GM12878 (cell line): ENCODE measurements at regions of chr1 and their contacts with region 1.

Region 1: DNA sequence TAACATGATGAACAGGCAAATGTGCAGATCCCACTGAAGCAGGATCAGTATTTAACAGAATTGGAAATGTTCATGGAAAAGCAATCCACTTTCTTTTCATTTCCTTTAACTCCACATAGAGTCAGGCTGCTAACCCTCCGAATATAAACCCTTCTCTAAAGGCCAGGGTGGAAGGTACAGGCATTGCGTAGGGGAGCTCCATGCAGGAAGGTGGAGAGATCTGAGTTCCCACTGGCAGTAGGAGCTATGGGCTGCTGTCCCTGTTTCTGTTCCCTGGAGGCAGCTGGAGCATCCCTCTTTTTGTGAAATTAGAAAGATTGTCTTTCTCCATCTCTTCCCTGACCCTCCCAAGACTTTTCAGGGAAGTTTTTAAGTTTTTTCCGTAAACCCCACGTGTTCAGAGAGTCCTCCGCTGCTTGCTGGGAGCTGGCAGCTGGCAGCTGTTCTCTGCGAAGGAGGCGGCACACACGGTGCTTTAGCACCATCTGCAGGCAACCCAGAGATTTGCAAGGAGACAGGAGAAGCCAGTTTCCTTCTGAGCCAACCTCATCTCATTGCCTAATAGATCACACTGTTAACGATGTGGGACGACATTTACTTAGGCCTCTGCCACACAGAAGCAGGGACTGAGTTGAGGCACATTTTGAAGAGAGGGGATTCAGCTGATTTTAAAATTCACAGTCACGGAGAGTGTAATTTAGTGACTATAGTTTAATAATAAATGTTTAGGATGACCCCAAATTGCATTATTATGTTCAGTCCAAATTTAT is 55.4 kb upstream of the HOOK1 start:
- DNase-seq: peak; percentile 46
- ATAC-seq: peak; percentile 98
- H3K4me3 ChIP-seq: no peak overlapping the region
- H3K27ac ChIP-seq: no peak overlapping the region
- H3K4me1 ChIP-seq: no peaks in the 10 kb centered on the region
- H3K27me3 ChIP-seq: no peaks in the 10 kb centered on the region
- CTCF ChIP-seq: peak; percentile 91 to 97 (median 96)
- EP300 ChIP-seq: no peak
- POLR2A ChIP-seq: no peak
- RAD21 ChIP-seq: peak; percentile 98

Region 2: DNA sequence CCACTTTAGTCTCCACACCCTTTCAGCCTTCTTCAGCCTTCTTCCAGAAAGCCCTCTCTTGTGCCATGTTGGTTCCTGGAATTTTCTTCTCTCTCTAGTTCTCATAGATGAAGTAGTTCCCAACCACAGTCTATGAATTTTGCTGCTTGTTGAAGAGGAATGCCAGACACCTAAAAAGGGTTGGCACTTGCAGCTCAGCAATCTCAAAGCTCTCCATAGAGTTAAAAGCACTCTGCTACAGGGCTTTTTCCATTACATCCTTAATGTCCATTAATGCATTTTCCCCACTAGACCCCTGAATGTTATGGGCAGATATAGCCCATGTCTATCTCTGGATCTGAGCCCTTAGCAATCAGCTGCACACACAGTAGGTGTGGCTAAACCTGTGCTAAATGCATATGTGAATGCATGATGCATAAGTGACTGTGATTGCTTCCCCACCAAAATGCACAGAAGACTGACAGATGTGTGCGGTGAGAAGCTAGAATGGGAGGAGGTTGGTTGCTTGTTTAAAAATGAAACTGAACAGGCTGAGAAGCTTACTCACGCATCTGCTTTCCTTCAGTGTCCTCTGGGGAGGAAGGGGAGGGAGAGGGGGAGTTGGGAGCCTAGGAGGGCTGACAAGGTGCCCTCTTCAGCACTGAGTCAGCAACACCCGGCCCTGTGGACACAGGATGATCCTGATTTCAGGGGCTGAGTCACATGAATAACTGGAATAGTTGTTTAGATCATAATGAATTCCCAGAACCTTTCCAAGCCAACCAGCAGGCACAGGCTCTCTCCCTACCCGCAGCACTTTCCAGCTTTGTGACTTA is 608.6 kb before region 1 on chr1:
- CTCF ChIA-PET with region 1: no interaction called
- POLR2A ChIA-PET with region 1: no interaction called
- RAD21 ChIA-PET with region 1: no interaction called
- SMC1A ChIA-PET with region 1: no interaction called
- in situ Hi-C with region 1: no loop called
- intact Hi-C with region 1: no loop called
- DNase-seq: peak; percentile 61
- ATAC-seq: peak; percentile 48
- H3K4me3 ChIP-seq: peak overlapping the region; percentile 15; the same call in 1 of the 2 replicates
- H3K27ac ChIP-seq: no peak overlapping the region
- H3K4me1 ChIP-seq: peaks cover 18% of the 10 kb centered on the region
- H3K27me3 ChIP-seq: no peaks in the 10 kb centered on the region
- CTCF ChIP-seq: no peak
- EP300 ChIP-seq: 0 out of 4 replicates have a peak, but pooled peaks of 1 of the 2 experiments have one; percentile 3
- POLR2A ChIP-seq: no peak
- RAD21 ChIP-seq: no peak

Region 3: DNA sequence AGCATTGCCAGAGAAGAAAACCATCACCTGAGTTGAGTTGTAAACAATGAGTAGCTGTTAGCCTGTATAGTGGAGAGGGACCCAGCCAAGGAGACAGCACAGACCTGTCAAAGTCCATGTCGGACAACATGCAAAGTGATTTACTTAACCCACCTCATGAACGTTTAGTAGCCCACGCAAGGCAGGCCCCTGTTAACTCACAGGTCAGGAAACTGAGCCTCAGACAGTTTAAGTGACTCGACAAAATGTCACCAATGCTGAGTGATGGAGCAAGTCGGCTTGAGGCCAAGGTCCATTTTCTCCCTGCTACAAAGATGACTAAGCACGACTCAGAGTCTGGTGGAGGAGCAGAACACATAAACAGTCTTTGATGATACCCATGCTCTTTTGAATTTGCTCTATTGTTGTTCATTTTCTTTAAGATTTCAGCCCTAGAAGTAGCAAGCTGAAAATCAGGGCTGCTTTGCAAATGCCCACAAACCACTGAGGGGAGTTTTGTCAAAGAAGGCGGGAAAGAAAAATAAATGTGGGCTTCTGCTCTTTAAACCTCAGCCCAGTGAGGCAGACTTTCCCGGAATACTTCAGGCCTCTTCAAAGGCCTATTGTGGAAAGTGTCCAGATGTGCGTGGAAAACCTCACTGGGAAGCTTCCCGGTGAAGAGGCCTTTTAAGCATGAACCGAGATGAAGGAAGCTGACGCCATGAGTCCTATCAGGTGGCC is 28.4 kb before region 1 on chr1:
- CTCF ChIA-PET with region 1: interaction called, 18 read pairs
- POLR2A ChIA-PET with region 1: no interaction called
- RAD21 ChIA-PET with region 1: interaction called, 3 read pairs
- SMC1A ChIA-PET with region 1: interaction called, 10 read pairs
- in situ Hi-C with region 1: no loop called
- intact Hi-C with region 1: no loop called
- DNase-seq: no peak
- ATAC-seq: peak; percentile 40
- H3K4me3 ChIP-seq: no peak overlapping the region
- H3K27ac ChIP-seq: no peak overlapping the region
- H3K4me1 ChIP-seq: no peaks in the 10 kb centered on the region; the same call in 1 of the 2 replicates
- H3K27me3 ChIP-seq: no peaks in the 10 kb centered on the region
- CTCF ChIP-seq: no peak
- EP300 ChIP-seq: no peak
- POLR2A ChIP-seq: no peak
- RAD21 ChIP-seq: no peak

Region 4: DNA sequence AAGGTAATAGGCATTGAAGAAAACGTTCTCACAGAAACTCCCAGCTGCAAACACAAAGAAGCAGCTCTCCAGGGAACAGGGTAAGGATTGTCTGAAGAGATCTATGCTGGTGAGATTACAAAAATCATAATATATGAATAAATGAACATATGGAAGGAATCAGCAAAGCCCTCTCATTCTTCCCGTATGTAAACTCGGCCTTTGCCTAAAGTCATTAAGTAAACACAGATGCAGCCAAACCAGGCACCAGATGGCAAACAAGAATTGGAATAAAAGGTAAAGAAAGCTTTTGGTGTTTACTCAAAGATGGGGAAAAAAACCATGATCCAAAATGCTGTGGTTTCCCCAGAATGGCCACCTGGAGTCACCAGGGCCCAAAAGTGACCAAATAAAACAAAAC is 21.2 kb before region 1 on chr1:
- CTCF ChIA-PET with region 1: interaction called, 11 read pairs
- POLR2A ChIA-PET with region 1: no interaction called
- RAD21 ChIA-PET with region 1: interaction called, 5 read pairs
- SMC1A ChIA-PET with region 1: interaction called, 3 read pairs
- in situ Hi-C with region 1: no loop called
- intact Hi-C with region 1: no loop called
- DNase-seq: no peak
- ATAC-seq: no peak
- H3K4me3 ChIP-seq: no peak overlapping the region
- H3K27ac ChIP-seq: no peak overlapping the region
- H3K4me1 ChIP-seq: no peaks in the 10 kb centered on the region
- H3K27me3 ChIP-seq: no peaks in the 10 kb centered on the region
- CTCF ChIP-seq: no peak
- EP300 ChIP-seq: no peak
- POLR2A ChIP-seq: no peak
- RAD21 ChIP-seq: no peak

Region 5: GRCh38 chr1:59743324-59744091 is 15.8 kb before region 1 on chr1:
- CTCF ChIA-PET with region 1: interaction called, 32 read pairs
- POLR2A ChIA-PET with region 1: no interaction called
- RAD21 ChIA-PET with region 1: interaction called, 5 read pairs
- SMC1A ChIA-PET with region 1: interaction called, 4 read pairs
- in situ Hi-C with region 1: no loop called
- intact Hi-C with region 1: no loop called
- DNase-seq: no peak
- ATAC-seq: no peak
- H3K4me3 ChIP-seq: no peak overlapping the region
- H3K27ac ChIP-seq: no peak overlapping the region
- H3K4me1 ChIP-seq: no peaks in the 10 kb centered on the region
- H3K27me3 ChIP-seq: no peaks in the 10 kb centered on the region
- CTCF ChIP-seq: no peak
- EP300 ChIP-seq: no peak
- POLR2A ChIP-seq: no peak
- RAD21 ChIP-seq: no peak

Region 6: DNA sequence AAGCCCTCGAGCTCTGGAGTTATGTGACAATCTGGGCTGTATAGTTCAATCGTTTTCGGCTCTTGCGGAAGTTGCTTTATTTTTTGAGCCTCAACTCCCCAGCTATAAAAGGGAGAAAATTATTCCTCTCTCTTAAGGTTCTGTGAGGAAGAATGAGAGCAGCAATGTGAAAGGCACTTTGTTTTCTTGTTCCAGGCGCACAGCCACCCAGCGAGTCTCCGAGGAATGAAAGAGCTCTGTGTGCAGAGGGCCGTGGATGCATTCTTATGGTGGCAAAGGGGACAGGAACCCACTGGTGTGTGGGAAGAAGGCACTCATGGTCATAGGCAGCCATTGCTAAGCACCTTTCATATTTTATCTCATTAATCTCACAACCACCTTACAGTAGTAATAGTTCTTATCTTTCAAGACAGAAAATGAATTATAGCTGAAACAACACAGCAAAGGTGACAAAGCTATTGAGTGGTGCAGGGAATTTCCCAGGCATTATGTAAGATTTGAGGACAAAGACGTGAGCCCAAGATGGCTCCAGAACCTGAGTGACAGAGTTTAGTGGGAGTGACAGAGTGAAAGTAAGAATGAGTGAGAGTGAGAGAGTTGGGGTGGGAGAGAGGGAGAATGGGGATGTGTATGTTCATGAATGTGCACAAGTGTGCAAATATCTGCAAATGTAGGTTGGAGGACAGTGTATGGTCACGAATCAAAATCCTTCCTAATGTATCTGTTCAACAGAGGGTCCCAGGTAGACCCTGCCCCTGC is 157.9 kb after region 1 on chr1:
- CTCF ChIA-PET with region 1: no interaction called
- POLR2A ChIA-PET with region 1: no interaction called
- RAD21 ChIA-PET with region 1: no interaction called
- SMC1A ChIA-PET with region 1: no interaction called
- in situ Hi-C with region 1: no loop called
- intact Hi-C with region 1: no loop called
- DNase-seq: no peak
- ATAC-seq: peak; percentile 55
- H3K4me3 ChIP-seq: no peak overlapping the region
- H3K27ac ChIP-seq: no peak overlapping the region
- H3K4me1 ChIP-seq: no peaks in the 10 kb centered on the region
- H3K27me3 ChIP-seq: no peaks in the 10 kb centered on the region
- CTCF ChIP-seq: no peak
- EP300 ChIP-seq: no peak
- POLR2A ChIP-seq: no peak
- RAD21 ChIP-seq: no peak